Caco-2 (cell line): ENCODE measurements at regions of chr1 and their contacts with region 1.

Region 1: GRCh38 chr1:147039916-147040315 is 101.8 kb downstream of the NBPF12 start:
- DNase-seq: no peak
- H3K4me3 ChIP-seq: no peak overlapping the region
- H3K4me3 Mint-ChIP-seq: no peak overlapping the region
- H3K27ac Mint-ChIP-seq: no peak overlapping the region
- H3K4me1 ChIP-seq: no peaks in the 10 kb centered on the region
- H3K4me1 Mint-ChIP-seq: no peaks in the 10 kb centered on the region
- H3K27me3 ChIP-seq: no peaks in the 10 kb centered on the region
- H3K27me3 Mint-ChIP-seq: peaks cover 19% of the 10 kb centered on the region
- CTCF ChIP-seq: no peak

Region 2: GRCh38 chr1:147050654-147051053 is 10.7 kb after region 1 on chr1:
- CTCF ChIA-PET with region 1: no interaction called
- POLR2A ChIA-PET with region 1: no interaction called
- intact Hi-C with region 1: loop called (anchors 2 kb)
- DNase-seq: no peak
- H3K4me3 ChIP-seq: no peak overlapping the region
- H3K4me3 Mint-ChIP-seq: no peak overlapping the region
- H3K27ac Mint-ChIP-seq: no peak overlapping the region
- H3K4me1 ChIP-seq: no peaks in the 10 kb centered on the region
- H3K4me1 Mint-ChIP-seq: no peaks in the 10 kb centered on the region
- H3K27me3 ChIP-seq: no peaks in the 10 kb centered on the region
- H3K27me3 Mint-ChIP-seq: peaks cover 9% of the 10 kb centered on the region
- CTCF ChIP-seq: no peak

Region 3: DNA sequence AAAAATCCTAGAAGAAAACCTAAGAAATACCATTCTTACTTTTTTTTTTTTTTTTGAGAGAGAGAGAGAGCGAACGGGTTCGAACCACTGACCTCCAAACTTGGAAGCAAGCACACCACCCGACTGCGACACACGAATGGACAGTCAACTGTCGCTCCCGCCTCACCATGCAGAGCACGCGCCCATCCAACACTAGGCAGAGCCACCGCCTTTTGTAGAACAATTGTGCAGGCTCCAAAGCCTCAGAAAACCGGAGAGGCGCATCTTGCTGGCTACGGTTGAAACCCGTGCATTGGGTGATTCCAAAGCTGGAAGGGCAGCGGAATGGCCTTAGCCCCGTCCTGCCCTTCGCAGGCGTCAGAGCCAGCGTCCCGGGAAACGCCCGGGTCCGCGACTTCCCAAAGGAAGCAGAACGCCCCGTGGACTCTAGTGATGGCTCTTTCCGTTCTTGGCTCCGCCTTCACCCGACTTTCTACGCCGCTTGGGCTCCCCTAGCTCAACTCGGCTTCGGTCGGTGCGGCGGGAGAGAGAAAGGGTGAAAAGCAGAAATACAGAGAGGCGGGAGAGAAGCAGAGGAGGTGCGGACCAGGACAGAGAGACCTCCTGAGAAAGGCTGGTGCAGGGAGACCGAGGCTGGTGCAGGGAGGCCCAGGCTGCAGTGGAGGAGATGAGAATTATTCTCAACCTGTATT is 32.6 kb after region 1 on chr1:
- CTCF ChIA-PET with region 1: no interaction called
- POLR2A ChIA-PET with region 1: no interaction called
- intact Hi-C with region 1: no loop called
- DNase-seq: no peak
- H3K4me3 ChIP-seq: no peak overlapping the region
- H3K4me3 Mint-ChIP-seq: no peak overlapping the region
- H3K27ac Mint-ChIP-seq: no peak overlapping the region
- H3K4me1 ChIP-seq: no peaks in the 10 kb centered on the region
- H3K4me1 Mint-ChIP-seq: no peaks in the 10 kb centered on the region
- H3K27me3 ChIP-seq: no peaks in the 10 kb centered on the region
- H3K27me3 Mint-ChIP-seq: no peaks in the 10 kb centered on the region
- CTCF ChIP-seq: no peak

Region 4: DNA sequence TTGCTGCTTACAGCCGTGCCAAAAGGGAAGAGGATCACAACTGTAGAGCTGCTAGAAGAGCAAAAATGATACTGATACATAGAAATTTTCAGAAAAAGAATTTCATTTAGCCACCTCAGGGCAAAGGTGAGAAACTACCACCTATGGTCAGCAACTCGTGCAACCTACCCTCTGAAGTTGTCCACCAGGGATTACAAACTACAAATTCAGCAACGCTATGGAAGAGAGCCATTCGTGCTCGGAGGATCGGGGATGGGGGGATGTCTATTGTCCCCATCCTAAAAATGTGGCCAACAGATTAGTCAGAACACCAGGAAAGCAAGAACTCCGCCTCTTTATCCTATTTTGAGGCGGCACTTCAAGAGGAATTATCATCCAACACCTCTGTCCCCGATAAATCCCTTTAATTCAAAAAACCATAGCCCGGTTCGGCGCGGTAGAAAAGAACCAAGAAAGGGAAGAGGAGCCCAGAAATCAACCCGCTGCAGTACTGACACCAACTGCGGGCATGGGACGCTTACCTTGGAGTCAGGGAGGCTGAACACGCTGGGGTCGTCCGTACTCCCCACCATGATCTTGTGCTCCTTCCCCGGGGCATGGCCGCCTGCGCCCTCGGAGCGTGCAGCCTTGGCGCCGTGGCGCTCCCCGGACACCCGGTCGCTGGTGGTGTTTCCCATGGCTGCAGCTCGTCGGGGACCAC is 131.7 kb after region 1 on chr1:
- CTCF ChIA-PET with region 1: no interaction called
- POLR2A ChIA-PET with region 1: no interaction called
- intact Hi-C with region 1: no loop called
- DNase-seq: peak in 1 of 2 experiments; percentile 17
- H3K4me3 ChIP-seq: peak overlapping the region; percentile 98
- H3K4me3 Mint-ChIP-seq: peak overlapping the region; percentile 96
- H3K27ac Mint-ChIP-seq: peak overlapping the region; percentile 98
- H3K4me1 ChIP-seq: peaks cover 44% of the 10 kb centered on the region
- H3K4me1 Mint-ChIP-seq: peaks cover 41% of the 10 kb centered on the region
- H3K27me3 ChIP-seq: no peaks in the 10 kb centered on the region
- H3K27me3 Mint-ChIP-seq: no peaks in the 10 kb centered on the region
- CTCF ChIP-seq: no peak